ENCODE measurements at regions of chr3 and their contacts with region 1.

Region 1: GRCh38 chr3:31839144-31839917 is 141.7 kb downstream of the OSBPL10 start:
- DNase-seq: no peak
- ATAC-seq: no peak
- H3K4me3 ChIP-seq: no peak overlapping the region
- H3K27ac ChIP-seq: no peak overlapping the region
- H3K4me1 ChIP-seq: no peaks in the 10 kb centered on the region
- H3K27me3 ChIP-seq: no peaks in the 10 kb centered on the region
- CTCF ChIP-seq: no peak

Region 2: DNA sequence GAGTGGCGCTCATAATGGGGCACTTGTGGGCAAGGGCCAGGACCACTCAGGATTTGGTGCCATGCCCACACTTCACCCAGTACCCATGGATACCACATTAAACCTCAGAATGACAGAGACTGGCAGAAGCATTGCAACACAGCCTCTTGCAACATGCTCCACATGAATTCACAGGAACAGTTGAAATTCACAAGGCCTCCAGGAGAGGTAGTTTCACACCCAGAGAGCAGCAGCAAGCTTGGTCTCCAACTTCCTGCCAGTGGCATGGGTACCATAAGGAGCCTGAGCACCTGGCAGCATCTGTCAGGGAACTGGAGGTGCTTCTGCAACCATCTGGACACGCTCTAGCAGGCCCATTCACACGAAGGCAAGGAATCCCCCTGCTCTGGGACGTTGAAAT is 40.7 kb after region 1 on chr3:
- CTCF ChIA-PET with region 1: no interaction called
- POLR2A ChIA-PET with region 1: interaction called, 18 read pairs
- in situ Hi-C with region 1: no loop called
- intact Hi-C with region 1: no loop called
- DNase-seq: no peak
- ATAC-seq: peak; percentile 59
- H3K4me3 ChIP-seq: no peak overlapping the region
- H3K27ac ChIP-seq: peak overlapping the region; percentile 17; the same call in 1 of the 2 replicates
- H3K4me1 ChIP-seq: peaks cover 34% of the 10 kb centered on the region
- H3K27me3 ChIP-seq: no peaks in the 10 kb centered on the region
- CTCF ChIP-seq: no peak